ENCODE measurements at regions of chr11 and their contacts with region 1.

Region 1: DNA sequence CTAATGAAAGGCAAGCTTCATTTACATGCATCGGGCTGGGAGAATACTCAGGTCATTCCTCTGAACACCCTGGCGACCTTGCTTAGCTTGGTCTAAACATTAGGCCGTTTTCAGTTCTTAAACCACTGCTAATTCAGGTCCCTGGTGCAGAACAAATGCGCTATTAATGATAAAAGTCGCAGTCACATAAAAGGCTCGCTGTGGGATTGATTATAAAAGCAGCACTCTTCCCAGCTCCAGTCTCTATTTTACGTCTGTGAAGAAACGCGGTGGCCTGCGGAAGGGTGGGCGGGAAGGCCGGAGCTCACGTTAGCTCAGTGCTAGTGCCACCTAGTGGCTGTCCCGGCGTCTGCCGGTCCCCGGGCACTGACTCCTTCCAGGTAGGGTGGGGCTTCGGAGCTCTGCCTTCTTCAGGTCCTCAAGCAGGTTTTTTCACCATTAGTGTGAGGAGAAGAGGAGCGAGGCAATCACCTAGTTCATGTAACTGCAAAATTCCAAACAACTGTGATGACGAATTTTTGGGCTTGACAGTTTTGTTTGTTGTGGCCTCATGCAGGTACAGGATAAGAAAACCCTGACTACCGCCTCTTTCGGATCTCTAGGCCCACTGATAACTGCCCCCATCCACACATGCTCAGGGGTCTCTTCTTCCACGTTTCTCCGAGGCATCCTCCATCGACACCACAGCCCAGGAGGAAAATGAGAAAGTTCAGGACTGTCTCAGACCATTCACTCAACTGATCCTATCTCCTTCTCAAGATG is 66.5 kb upstream of the CLMP start:
- DNase-seq: no peak
- H3K4me3 ChIP-seq: no peak overlapping the region
- H3K27me3 ChIP-seq: no peaks in the 10 kb centered on the region
- CTCF ChIP-seq: peak; percentile 97

Region 2: GRCh38 chr11:123054301-123055065 is 207.0 kb before region 1 on chr11:
- CTCF ChIA-PET with region 1: interaction called, 7 read pairs
- POLR2A ChIA-PET with region 1: interaction called, 13 read pairs
- DNase-seq: no peak
- H3K4me3 ChIP-seq: no peak overlapping the region
- H3K27me3 ChIP-seq: no peaks in the 10 kb centered on the region
- CTCF ChIP-seq: peak; percentile 63

Region 3: GRCh38 chr11:123103326-123103980 is 158.1 kb before region 1 on chr11:
- CTCF ChIA-PET with region 1: interaction called, 31 read pairs
- POLR2A ChIA-PET with region 1: interaction called, 3 read pairs
- DNase-seq: peak; percentile 46
- H3K4me3 ChIP-seq: no peak overlapping the region
- H3K27me3 ChIP-seq: no peaks in the 10 kb centered on the region
- CTCF ChIP-seq: peak; percentile 66

Region 4: DNA sequence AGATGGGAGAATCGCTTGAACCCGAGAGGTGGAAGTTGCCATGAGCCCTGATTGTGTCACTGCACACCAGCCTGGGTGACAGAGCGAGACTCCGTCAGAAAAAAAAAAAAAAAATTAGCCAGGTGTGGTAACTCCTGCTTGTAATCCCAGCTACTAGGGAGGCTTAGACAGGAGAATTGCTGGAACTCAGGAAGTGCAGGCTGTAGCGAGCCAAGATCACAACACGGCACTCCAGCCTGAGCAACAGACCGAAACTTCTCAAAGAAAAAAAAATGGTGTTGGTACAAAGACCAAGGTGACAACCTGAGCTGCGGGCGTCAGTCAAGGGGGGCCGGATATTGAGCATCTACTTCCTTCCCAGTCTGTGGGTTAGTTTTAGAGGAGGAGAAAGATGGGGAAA is 151.2 kb before region 1 on chr11:
- CTCF ChIA-PET with region 1: interaction called, 27 read pairs
- POLR2A ChIA-PET with region 1: no interaction called
- DNase-seq: no peak
- H3K4me3 ChIP-seq: no peak overlapping the region
- H3K27me3 ChIP-seq: no peaks in the 10 kb centered on the region
- CTCF ChIP-seq: no peak

Region 5: GRCh38 chr11:123188508-123189165 is 72.9 kb before region 1 on chr11:
- CTCF ChIA-PET with region 1: interaction called, 10 read pairs
- POLR2A ChIA-PET with region 1: no interaction called
- DNase-seq: peak; percentile 49
- H3K4me3 ChIP-seq: peak overlapping the region; percentile 9
- H3K27me3 ChIP-seq: no peaks in the 10 kb centered on the region
- CTCF ChIP-seq: peak; percentile 23

Region 6: GRCh38 chr11:123246749-123247495 is 14.6 kb before region 1 on chr11:
- CTCF ChIA-PET with region 1: interaction called, 22 read pairs
- POLR2A ChIA-PET with region 1: no interaction called
- DNase-seq: no peak
- H3K4me3 ChIP-seq: no peak overlapping the region
- H3K27me3 ChIP-seq: no peaks in the 10 kb centered on the region
- CTCF ChIP-seq: peak; percentile 97

Region 7: DNA sequence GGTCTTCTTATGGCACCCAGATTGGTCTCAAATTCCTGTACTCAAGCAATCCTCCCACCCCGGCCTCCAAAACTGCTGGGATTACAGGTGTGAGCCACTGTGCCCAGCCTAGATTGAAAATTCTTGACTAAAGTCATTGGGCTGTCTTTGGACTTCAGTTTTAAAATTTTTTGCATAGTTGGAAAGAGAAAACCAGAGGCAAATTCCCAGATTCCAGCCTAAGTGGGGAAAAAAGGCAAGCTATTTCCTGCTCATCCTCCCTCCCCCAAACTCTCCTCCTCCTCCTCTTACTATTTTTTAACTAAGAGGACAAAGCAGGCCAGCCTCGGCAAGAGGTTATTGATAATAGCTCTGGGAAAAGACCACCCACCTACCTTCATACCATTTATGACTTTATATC is 12.1 kb after region 1 on chr11:
- CTCF ChIA-PET with region 1: interaction called, 11 read pairs
- POLR2A ChIA-PET with region 1: no interaction called
- DNase-seq: no peak
- H3K4me3 ChIP-seq: no peak overlapping the region
- H3K27me3 ChIP-seq: no peaks in the 10 kb centered on the region
- CTCF ChIP-seq: no peak

Region 8: DNA sequence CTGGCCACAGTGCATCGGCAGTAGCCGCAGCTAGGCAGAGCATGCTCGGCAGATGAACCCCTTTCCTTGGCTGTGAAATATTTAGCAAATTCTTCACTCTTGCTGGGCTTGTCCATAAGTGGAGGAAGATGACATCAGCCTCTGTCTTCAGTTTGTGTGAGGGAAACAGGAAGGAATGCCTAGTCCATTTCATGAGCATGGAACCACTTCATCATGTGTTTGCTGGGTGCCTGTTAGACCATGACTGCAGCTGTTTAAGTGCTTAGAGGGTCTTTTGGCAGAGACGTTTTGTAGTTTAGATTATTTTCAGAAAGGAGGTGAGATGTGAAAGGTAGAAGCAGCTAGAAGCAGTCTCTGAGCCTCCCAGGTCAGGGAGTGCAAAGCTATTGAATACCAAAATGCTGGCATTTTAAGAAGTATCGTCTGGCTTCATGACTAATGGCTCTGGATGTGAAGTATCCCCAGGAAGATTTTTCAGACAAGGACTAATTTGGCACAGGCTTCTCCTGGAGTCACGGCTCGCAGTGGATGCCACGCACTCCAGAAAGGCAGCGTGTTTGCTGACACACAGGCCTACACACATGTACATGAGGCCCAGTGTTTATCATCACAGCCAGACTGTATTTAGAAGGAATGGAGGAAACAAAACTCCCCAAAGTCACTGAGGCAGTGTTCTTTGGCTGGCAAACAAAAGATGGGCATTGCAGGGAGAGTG is 125.4 kb after region 1 on chr11:
- CTCF ChIA-PET with region 1: no interaction called
- POLR2A ChIA-PET with region 1: no interaction called
- DNase-seq: peak; percentile 61
- H3K4me3 ChIP-seq: no peak overlapping the region
- H3K27me3 ChIP-seq: peaks cover 3% of the 10 kb centered on the region; the same call in 1 of the 2 replicates
- CTCF ChIP-seq: no peak

Measured in BJ (cell line).